ENCODE measurements at regions of chr6 and their contacts with region 1.

Region 1: GRCh38 chr6:104955927-104956730 is 778 bp upstream of the LIN28B start:
- DNase-seq: no peak
- ATAC-seq: no peak
- H3K4me3 Mint-ChIP-seq: no peak overlapping the region
- H3K27ac Mint-ChIP-seq: no peak overlapping the region
- H3K4me1 Mint-ChIP-seq: peaks cover 14% of the 10 kb centered on the region
- H3K27me3 Mint-ChIP-seq: peaks cover 64% of the 10 kb centered on the region
- CTCF ChIP-seq: no peak

Region 2: GRCh38 chr6:104940881-104941728 is 15.0 kb before region 1 on chr6:
- CTCF ChIA-PET with region 1: no interaction called
- POLR2A ChIA-PET with region 1: no interaction called
- intact Hi-C with region 1: no loop called
- DNase-seq: peak; percentile 50
- ATAC-seq: peak; percentile 89
- H3K4me3 Mint-ChIP-seq: peak overlapping the region; percentile 60
- H3K27ac Mint-ChIP-seq: no peak overlapping the region
- H3K4me1 Mint-ChIP-seq: peaks cover 6% of the 10 kb centered on the region
- H3K27me3 Mint-ChIP-seq: peaks cover 43% of the 10 kb centered on the region
- CTCF ChIP-seq: peak; percentile 62

Region 3: GRCh38 chr6:105024803-105025202 is 68.7 kb after region 1 on chr6:
- CTCF ChIA-PET with region 1: no interaction called
- POLR2A ChIA-PET with region 1: no interaction called
- intact Hi-C with region 1: no loop called
- DNase-seq: no peak
- ATAC-seq: no peak
- H3K4me3 Mint-ChIP-seq: no peak overlapping the region
- H3K27ac Mint-ChIP-seq: no peak overlapping the region
- H3K4me1 Mint-ChIP-seq: no peaks in the 10 kb centered on the region
- H3K27me3 Mint-ChIP-seq: peaks cover 11% of the 10 kb centered on the region
- CTCF ChIP-seq: no peak

Region 4: GRCh38 chr6:105077596-105078385 is 121.7 kb after region 1 on chr6:
- CTCF ChIA-PET with region 1: no interaction called
- POLR2A ChIA-PET with region 1: no interaction called
- intact Hi-C with region 1: loop called (anchors 10 kb)
- DNase-seq: no peak
- ATAC-seq: no peak
- H3K4me3 Mint-ChIP-seq: no peak overlapping the region
- H3K27ac Mint-ChIP-seq: no peak overlapping the region
- H3K4me1 Mint-ChIP-seq: no peaks in the 10 kb centered on the region
- H3K27me3 Mint-ChIP-seq: peaks cover 4% of the 10 kb centered on the region
- CTCF ChIP-seq: peak; percentile 70